Heart right ventricle (tissue), 16 donors: ENCODE measurements at regions of chr5 and their contacts with region 1.

Region 1: GRCh38 chr5:67246108-67246507 is 49.5 kb upstream of the CD180 start:
- DNase-seq: peak in 1 of 2 donors; percentile 50
- ATAC-seq: peak in 6 of 8 donors; percentile 36 to 72 (median 54)
- H3K4me3 ChIP-seq: no peak overlapping the region
- H3K27ac ChIP-seq: no peak overlapping the region
- H3K4me1 ChIP-seq: peaks cover 0 to 43% (median 25%) of the 10 kb centered on the region in 9 donors
- H3K27me3 ChIP-seq: no peaks in the 10 kb centered on the region
- CTCF ChIP-seq: peak; percentile 67 to 85 (median 77)

Region 2: GRCh38 chr5:67395790-67396418 is 149.8 kb after region 1 on chr5:
- intact Hi-C with region 1: loop called in 3 of 10 experiments (anchors 5 to 10 kb)
- DNase-seq: no peak
- ATAC-seq: peak in 1 of 8 donors; percentile 33
- H3K4me3 ChIP-seq: no peak overlapping the region
- H3K27ac ChIP-seq: no peak overlapping the region
- H3K4me1 ChIP-seq: no peaks in the 10 kb centered on the region
- H3K27me3 ChIP-seq: no peaks in the 10 kb centered on the region
- CTCF ChIP-seq: peak in 3 of 9 donors; percentile 9 to 30 (median 21)

Region 3: GRCh38 chr5:67648201-67648671 is 402.1 kb after region 1 on chr5:
- intact Hi-C with region 1: loop called in 1 of 10 experiments (anchors 5 kb)
- DNase-seq: peak; percentile 73 to 74
- ATAC-seq: peak; percentile 84 to 99 (median 94)
- H3K4me3 ChIP-seq: no peak overlapping the region
- H3K27ac ChIP-seq: peak overlapping the region in 7 of 10 donors; percentile 2 to 81 (median 62)
- H3K4me1 ChIP-seq: peaks cover 0 to 31% (median 13%) of the 10 kb centered on the region in 9 donors
- H3K27me3 ChIP-seq: no peaks in the 10 kb centered on the region
- CTCF ChIP-seq: no peak

Region 4: GRCh38 chr5:67792891-67793290 is 546.8 kb after region 1 on chr5:
- intact Hi-C with region 1: loop called in 1 of 10 experiments (anchors 5 kb)
- DNase-seq: peak in 1 of 2 donors; percentile 63
- ATAC-seq: peak; percentile 57 to 90 (median 69)
- H3K4me3 ChIP-seq: no peak overlapping the region
- H3K27ac ChIP-seq: peak overlapping the region in 2 of 10 donors; percentile 20 to 21
- H3K4me1 ChIP-seq: peaks cover 0 to 9% (median 0%) of the 10 kb centered on the region in 9 donors
- H3K27me3 ChIP-seq: no peaks in the 10 kb centered on the region
- CTCF ChIP-seq: no peak

Region 5: GRCh38 chr5:68272289-68272688 is 1026.2 kb after region 1 on chr5:
- intact Hi-C with region 1: loop called in 5 of 10 experiments (anchors 5 kb)
- DNase-seq: no peak
- ATAC-seq: no peak
- H3K4me3 ChIP-seq: no peak overlapping the region
- H3K27ac ChIP-seq: peak overlapping the region in 6 of 10 donors; percentile 51 to 92 (median 76)
- H3K4me1 ChIP-seq: peaks cover 13 to 99% (median 78%) of the 10 kb centered on the region in 9 donors
- H3K27me3 ChIP-seq: no peaks in the 10 kb centered on the region
- CTCF ChIP-seq: peak in 8 of 9 donors; percentile 7 to 64 (median 48)

Region 6: DNA sequence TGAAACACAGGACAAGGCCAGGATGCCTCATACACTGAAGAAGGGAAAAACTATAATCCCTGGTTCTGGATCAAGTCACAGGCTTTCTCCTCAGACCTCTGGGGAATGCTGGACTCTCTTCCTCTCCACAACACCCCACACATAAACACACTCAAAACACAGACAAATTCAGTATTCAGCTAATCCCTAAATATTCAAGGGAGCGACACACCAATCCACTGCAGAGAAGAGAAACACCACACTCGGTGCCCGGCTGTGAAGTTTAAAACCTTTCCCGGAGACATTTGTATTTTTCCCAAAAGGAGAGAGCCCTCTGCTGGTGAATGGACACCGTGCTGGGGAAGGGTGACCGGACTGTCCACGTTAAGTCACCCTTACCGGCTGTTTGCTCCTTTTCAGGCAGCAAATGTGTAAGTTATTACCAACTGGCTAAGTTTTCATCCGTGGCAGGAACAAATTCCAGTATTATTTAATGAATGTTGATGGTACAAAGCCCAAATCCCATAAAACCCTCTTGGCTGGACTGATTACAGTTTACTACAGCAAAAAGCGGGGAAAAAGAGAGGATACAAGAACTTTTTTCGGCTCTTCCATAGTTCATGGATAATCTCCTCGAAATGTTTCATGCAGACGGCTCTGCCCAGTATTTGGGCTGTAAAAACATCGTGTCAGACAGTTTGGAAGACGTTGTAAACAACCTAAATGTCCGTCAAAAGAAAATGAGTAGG is 1716.8 kb after region 1 on chr5:
- intact Hi-C with region 1: loop called in 1 of 10 experiments (anchors 5 kb)
- DNase-seq: peak; percentile 46 to 77
- ATAC-seq: peak; percentile 76 to 96 (median 88)
- H3K4me3 ChIP-seq: no peak overlapping the region
- H3K27ac ChIP-seq: peak overlapping the region in 2 of 10 donors; percentile 16 to 43
- H3K4me1 ChIP-seq: peaks cover 0 to 13% (median 5%) of the 10 kb centered on the region in 9 donors
- H3K27me3 ChIP-seq: no peaks in the 10 kb centered on the region
- CTCF ChIP-seq: peak; percentile 58 to 94 (median 84)